IMR-90 (cell line): ENCODE measurements at regions of chr1 and their contacts with region 1.

Region 1: GRCh38 chr1:67766141-67766978 is 66.9 kb downstream of the GNG12 start:
- DNase-seq: peak; percentile 94
- ATAC-seq: peak; percentile 83
- H3K4me3 ChIP-seq: no peak overlapping the region; the same call in 1 of the 2 replicates
- H3K27ac ChIP-seq: peak overlapping the region; percentile 65
- H3K4me1 ChIP-seq: peaks cover 27% of the 10 kb centered on the region
- H3K27me3 ChIP-seq: no peaks in the 10 kb centered on the region
- CTCF ChIP-seq: peak; percentile 63
- POLR2A ChIP-seq: no peak
- RAD21 ChIP-seq: peak; percentile 63

Region 2: GRCh38 chr1:67832737-67833601 is 66.6 kb after region 1 on chr1 and contains the start of gene GNG12:
- CTCF ChIA-PET with region 1: interaction called, 11 read pairs
- POLR2A ChIA-PET with region 1: no interaction called
- dilution Hi-C with region 1: no loop called
- in situ Hi-C with region 1: loop called (anchors 5 kb)
- intact Hi-C with region 1: loop called (anchors 1 kb)
- DNase-seq: peak; percentile 73
- ATAC-seq: peak; percentile 89
- H3K4me3 ChIP-seq: peak within 1 kb of the TSS; percentile 93
- H3K27ac ChIP-seq: peak within 1 kb of the TSS; percentile 75
- H3K4me1 ChIP-seq: peaks cover 2% of the 10 kb centered on the region; the same call in 1 of the 2 replicates
- H3K27me3 ChIP-seq: no peaks in the 10 kb centered on the region
- CTCF ChIP-seq: no peak
- POLR2A ChIP-seq: peak; percentile 66
- RAD21 ChIP-seq: no peak
- total RNA-seq, gene GNG12: 132 and 233 TPM in 2 replicates

Region 3: GRCh38 chr1:67840449-67840848 is 74.1 kb after region 1 on chr1:
- CTCF ChIA-PET with region 1: interaction called, 4 read pairs
- POLR2A ChIA-PET with region 1: no interaction called
- dilution Hi-C with region 1: no loop called
- in situ Hi-C with region 1: loop called (anchors 5 kb)
- intact Hi-C with region 1: no loop called
- DNase-seq: peak; percentile 94
- ATAC-seq: peak; percentile 79
- H3K4me3 ChIP-seq: no peak overlapping the region
- H3K27ac ChIP-seq: no peak overlapping the region
- H3K4me1 ChIP-seq: peaks cover 10% of the 10 kb centered on the region
- H3K27me3 ChIP-seq: no peaks in the 10 kb centered on the region
- CTCF ChIP-seq: no peak
- POLR2A ChIP-seq: no peak
- RAD21 ChIP-seq: no peak

Region 4: DNA sequence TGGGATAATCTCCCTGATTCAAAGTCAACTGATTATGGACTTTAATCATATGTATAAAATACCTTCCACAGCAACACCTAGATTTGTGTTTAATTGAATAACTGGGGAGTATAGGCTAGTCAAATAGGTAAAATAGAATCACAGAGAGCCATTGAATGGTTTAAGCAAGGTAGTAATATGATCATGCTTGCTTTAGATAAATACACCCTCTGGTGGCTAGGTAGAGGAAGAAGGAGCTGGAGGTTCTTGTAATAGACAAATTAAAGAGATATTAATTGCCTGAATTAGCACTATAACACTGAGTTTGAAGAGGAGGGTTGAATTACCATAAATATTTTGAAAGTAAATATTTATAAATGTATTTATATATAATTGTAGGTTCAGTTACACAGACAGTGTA is 243.7 kb after region 1 on chr1:
- CTCF ChIA-PET with region 1: no interaction called
- POLR2A ChIA-PET with region 1: no interaction called
- dilution Hi-C with region 1: no loop called
- in situ Hi-C with region 1: no loop called
- intact Hi-C with region 1: loop called (anchors 2 kb)
- DNase-seq: peak; percentile 47
- ATAC-seq: peak; percentile 59
- H3K4me3 ChIP-seq: no peak overlapping the region
- H3K27ac ChIP-seq: no peak overlapping the region
- H3K4me1 ChIP-seq: no peaks in the 10 kb centered on the region; the same call in 1 of the 2 replicates
- H3K27me3 ChIP-seq: no peaks in the 10 kb centered on the region
- CTCF ChIP-seq: peak; percentile 58
- POLR2A ChIP-seq: no peak
- RAD21 ChIP-seq: peak; percentile 70

Region 5: DNA sequence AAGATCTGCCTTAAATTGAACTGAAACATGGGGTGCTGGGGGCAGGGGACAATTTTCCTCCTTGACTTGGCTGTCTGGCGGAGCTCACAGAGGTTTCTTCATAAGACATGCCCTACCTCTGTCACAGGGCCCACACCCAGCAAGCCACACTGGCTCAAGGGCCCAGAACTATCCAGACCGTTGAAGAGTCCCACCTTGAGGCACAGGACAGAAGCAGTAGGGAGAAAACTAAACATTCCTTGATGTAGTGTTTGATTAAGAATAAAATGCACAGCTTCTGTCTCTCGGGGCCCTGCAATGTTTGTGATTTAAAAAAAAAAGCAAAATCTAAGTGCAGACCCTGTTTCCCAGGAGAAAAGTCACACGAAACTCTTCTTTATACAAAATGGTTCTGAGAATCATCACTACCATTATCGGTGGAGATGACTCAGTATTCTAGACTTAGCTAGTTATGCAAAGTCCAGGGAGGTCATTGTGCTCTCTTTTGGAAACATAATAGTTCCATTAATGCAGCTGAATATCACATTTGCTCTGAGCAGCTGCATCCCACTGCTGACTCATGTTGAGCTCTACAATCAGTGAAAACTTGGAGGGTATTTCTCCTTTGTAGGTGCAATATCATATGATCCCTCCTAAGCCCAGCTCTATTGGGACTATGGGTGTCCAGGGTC is 337.7 kb after region 1 on chr1:
- CTCF ChIA-PET with region 1: interaction called, 3 read pairs
- POLR2A ChIA-PET with region 1: no interaction called
- dilution Hi-C with region 1: no loop called
- in situ Hi-C with region 1: loop called (anchors 5 kb)
- intact Hi-C with region 1: no loop called
- DNase-seq: peak; percentile 94
- ATAC-seq: peak; percentile 91
- H3K4me3 ChIP-seq: no peak overlapping the region
- H3K27ac ChIP-seq: peak overlapping the region; percentile 80
- H3K4me1 ChIP-seq: peaks cover 7% of the 10 kb centered on the region
- H3K27me3 ChIP-seq: no peaks in the 10 kb centered on the region
- CTCF ChIP-seq: no peak
- POLR2A ChIP-seq: no peak
- RAD21 ChIP-seq: peak; percentile 1; the same call in 1 of the 2 replicates

Region 6: GRCh38 chr1:68111519-68112436 is 345.4 kb after region 1 on chr1:
- CTCF ChIA-PET with region 1: interaction called, 3 read pairs
- POLR2A ChIA-PET with region 1: interaction called, 7 read pairs
- dilution Hi-C with region 1: no loop called
- in situ Hi-C with region 1: loop called (anchors 5 kb)
- intact Hi-C with region 1: loop called (anchors 1 kb)
- DNase-seq: peak; percentile 93
- ATAC-seq: peak; percentile 85
- H3K4me3 ChIP-seq: no peak overlapping the region
- H3K27ac ChIP-seq: no peak overlapping the region
- H3K4me1 ChIP-seq: peaks cover 9% of the 10 kb centered on the region
- H3K27me3 ChIP-seq: no peaks in the 10 kb centered on the region
- CTCF ChIP-seq: peak; percentile 83
- POLR2A ChIP-seq: 0 out of 2 replicates have a peak, but pooled peaks have one; percentile 30
- RAD21 ChIP-seq: peak; percentile 95

Region 7: GRCh38 chr1:69196071-69196470 is 1429.7 kb after region 1 on chr1:
- CTCF ChIA-PET with region 1: no interaction called
- POLR2A ChIA-PET with region 1: no interaction called
- dilution Hi-C with region 1: no loop called
- in situ Hi-C with region 1: no loop called
- intact Hi-C with region 1: no loop called
- DNase-seq: no peak
- ATAC-seq: no peak
- H3K4me3 ChIP-seq: no peak overlapping the region
- H3K27ac ChIP-seq: no peak overlapping the region
- H3K4me1 ChIP-seq: no peaks in the 10 kb centered on the region
- H3K27me3 ChIP-seq: no peaks in the 10 kb centered on the region
- CTCF ChIP-seq: no peak
- POLR2A ChIP-seq: no peak
- RAD21 ChIP-seq: no peak